Left ventricle myocardium inferior (tissue), 1 donor: ENCODE measurements at regions of chr6 and their contacts with region 1.

Region 1: GRCh38 chr6:122033539-122034181 is 365.8 kb upstream of the HSF2 start:
- DNase-seq: no peak
- H3K4me3 ChIP-seq: no peak overlapping the region
- H3K27ac ChIP-seq: peak overlapping the region; percentile 44
- H3K4me1 ChIP-seq: peaks cover 7% of the 10 kb centered on the region
- H3K27me3 ChIP-seq: no peaks in the 10 kb centered on the region
- CTCF ChIP-seq: peak; percentile 75

Region 2: GRCh38 chr6:121849477-121849876 is 184.2 kb before region 1 on chr6:
- intact Hi-C with region 1: loop called (anchors 10 kb)
- DNase-seq: peak; percentile 17
- H3K4me3 ChIP-seq: no peak overlapping the region
- H3K27ac ChIP-seq: peak overlapping the region; percentile 49
- H3K4me1 ChIP-seq: peaks cover 51% of the 10 kb centered on the region
- H3K27me3 ChIP-seq: no peaks in the 10 kb centered on the region
- CTCF ChIP-seq: peak; percentile 81

Region 3: DNA sequence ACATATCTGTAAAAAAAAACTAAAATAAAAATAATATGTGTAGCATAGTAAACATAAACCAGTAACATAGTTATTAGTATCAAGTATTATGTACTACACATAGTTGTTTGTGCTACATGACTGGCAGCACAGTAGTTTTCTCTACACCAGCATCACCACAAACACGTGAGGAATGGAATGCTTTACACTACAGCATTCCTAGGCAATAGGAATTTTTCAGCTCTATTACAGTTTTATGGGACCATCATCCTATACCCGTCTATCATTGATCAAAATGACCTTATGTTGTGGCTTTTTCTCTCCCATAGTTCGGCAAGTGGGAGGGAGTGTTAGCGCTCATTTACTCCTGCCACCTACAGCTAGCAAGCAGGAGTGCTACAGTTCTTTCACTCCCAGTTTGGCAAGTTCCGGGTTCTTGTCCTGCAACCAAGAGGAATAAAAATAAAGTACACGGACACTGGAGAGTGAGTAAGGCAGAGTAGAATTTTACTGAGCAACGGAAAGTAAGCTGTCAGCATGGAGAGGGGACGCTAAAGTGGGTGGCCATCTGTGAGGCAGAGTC is 169.0 kb after region 1 on chr6:
- intact Hi-C with region 1: no loop called
- DNase-seq: no peak
- H3K4me3 ChIP-seq: no peak overlapping the region
- H3K27ac ChIP-seq: no peak overlapping the region
- H3K4me1 ChIP-seq: no peaks in the 10 kb centered on the region
- H3K27me3 ChIP-seq: no peaks in the 10 kb centered on the region
- CTCF ChIP-seq: no peak

Region 4: GRCh38 chr6:122302067-122302466 is 268.4 kb after region 1 on chr6:
- intact Hi-C with region 1: no loop called
- DNase-seq: no peak
- H3K4me3 ChIP-seq: no peak overlapping the region
- H3K27ac ChIP-seq: no peak overlapping the region
- H3K4me1 ChIP-seq: no peaks in the 10 kb centered on the region
- H3K27me3 ChIP-seq: no peaks in the 10 kb centered on the region
- CTCF ChIP-seq: no peak